Transverse colon (tissue), 4 donors: ENCODE measurements at regions of chr15 and their contacts with region 1.

Region 1: DNA sequence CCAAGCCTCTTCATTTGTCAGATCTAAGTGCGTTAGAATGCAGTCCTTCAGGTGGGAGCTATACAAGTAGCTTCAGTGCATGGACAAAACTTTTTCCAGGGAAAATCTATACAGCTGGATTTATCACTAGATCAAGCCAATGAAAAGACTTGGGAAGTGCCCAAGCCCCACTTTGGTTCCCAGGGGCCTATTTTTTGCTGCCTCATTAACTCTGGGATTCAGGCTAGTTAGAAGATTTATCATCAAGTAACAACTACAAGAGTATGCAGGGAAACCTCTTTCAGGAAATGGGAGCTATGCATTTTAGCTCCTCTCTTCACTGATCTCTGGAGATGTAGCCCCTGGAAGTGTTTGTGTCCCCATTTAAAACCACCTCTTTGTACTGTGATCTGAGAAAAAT is 908.8 kb downstream of the SQOR start:
- DNase-seq: no peak
- H3K4me3 ChIP-seq: no peak overlapping the region
- H3K27ac ChIP-seq: no peak overlapping the region
- H3K4me1 ChIP-seq: no peaks in the 10 kb centered on the region
- H3K27me3 ChIP-seq: no peaks in the 10 kb centered on the region
- CTCF ChIP-seq: no peak
- EP300 ChIP-seq: no peak
- POLR2A ChIP-seq: no peak

Region 2: GRCh38 chr15:46207341-46207740 is 336.3 kb before region 1 on chr15:
- in situ Hi-C with region 1: no loop called
- intact Hi-C with region 1: no loop called
- DNase-seq: no peak
- H3K4me3 ChIP-seq: no peak overlapping the region
- H3K27ac ChIP-seq: no peak overlapping the region
- H3K4me1 ChIP-seq: no peaks in the 10 kb centered on the region
- H3K27me3 ChIP-seq: no peaks in the 10 kb centered on the region
- CTCF ChIP-seq: no peak
- EP300 ChIP-seq: no peak
- POLR2A ChIP-seq: no peak

Region 3: DNA sequence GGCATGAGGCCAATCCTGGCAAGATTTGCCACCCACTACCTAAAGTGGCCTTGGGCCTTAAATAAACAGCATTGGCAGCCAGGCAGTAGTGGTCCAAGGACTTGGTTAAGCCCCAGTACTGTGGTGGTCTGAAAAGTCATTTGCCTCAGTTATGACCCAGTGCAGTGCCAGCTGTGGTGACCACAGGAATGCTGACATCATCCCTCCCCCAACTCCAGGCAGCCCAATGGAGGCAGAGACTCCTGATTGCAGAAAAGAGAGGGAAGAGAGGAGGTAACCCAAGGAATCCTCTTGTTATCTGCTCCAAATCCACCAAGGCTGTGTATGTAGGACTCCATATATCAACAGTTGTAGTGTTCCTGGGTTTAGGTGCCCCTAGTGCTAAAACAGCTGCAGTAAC is 25.2 kb before region 1 on chr15:
- in situ Hi-C with region 1: no loop called
- intact Hi-C with region 1: loop called (anchors 1 kb)
- DNase-seq: no peak
- H3K4me3 ChIP-seq: no peak overlapping the region
- H3K27ac ChIP-seq: no peak overlapping the region
- H3K4me1 ChIP-seq: no peaks in the 10 kb centered on the region
- H3K27me3 ChIP-seq: no peaks in the 10 kb centered on the region
- CTCF ChIP-seq: no peak
- EP300 ChIP-seq: no peak
- POLR2A ChIP-seq: no peak

Region 4: GRCh38 chr15:46795685-46796084 is 252.1 kb after region 1 on chr15:
- in situ Hi-C with region 1: no loop called
- intact Hi-C with region 1: no loop called
- DNase-seq: no peak
- H3K4me3 ChIP-seq: no peak overlapping the region
- H3K27ac ChIP-seq: no peak overlapping the region
- H3K4me1 ChIP-seq: no peaks in the 10 kb centered on the region
- H3K27me3 ChIP-seq: no peaks in the 10 kb centered on the region
- CTCF ChIP-seq: no peak
- EP300 ChIP-seq: no peak
- POLR2A ChIP-seq: no peak

Region 5: GRCh38 chr15:46918462-46919135 is 375.0 kb after region 1 on chr15:
- in situ Hi-C with region 1: no loop called
- intact Hi-C with region 1: no loop called
- DNase-seq: no peak
- H3K4me3 ChIP-seq: no peak overlapping the region
- H3K27ac ChIP-seq: no peak overlapping the region
- H3K4me1 ChIP-seq: no peaks in the 10 kb centered on the region
- H3K27me3 ChIP-seq: no peaks in the 10 kb centered on the region
- CTCF ChIP-seq: no peak
- EP300 ChIP-seq: no peak
- POLR2A ChIP-seq: no peak